Lower leg skin (tissue), 4 donors: ENCODE measurements at regions of chr15 and their contacts with region 1.

Region 1: DNA sequence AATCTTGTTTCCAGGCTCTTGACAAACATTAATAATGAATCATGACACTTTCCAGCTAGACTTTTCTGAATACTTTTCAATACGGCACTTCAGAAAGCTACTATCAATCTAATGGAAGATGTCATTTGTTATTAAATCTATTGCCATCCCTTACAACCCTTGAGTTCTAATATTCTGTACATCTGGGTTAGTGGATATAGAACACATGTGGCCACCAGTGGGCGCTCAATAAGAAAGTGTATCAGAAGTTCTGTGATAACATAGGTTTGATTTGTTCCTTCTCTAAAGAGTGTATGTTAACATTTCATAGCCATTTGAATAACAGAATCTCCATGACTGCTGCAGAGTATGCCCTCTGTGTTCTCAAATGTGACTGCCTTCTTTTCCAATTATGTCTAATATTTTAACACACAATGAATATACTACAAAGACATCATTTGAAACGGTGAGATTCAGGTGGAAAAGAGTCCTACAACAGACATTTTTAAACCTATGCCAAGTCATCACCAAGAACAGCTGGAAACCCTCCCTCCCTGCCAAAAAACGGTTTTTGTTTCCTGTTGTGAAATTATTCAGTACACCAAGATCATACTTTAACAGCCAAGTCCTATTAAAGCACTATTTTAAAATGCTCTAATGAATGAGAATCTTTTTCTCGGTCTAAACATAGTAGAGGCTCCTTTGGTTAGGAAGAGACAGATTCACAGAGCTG is 22.2 kb downstream of the ALDH1A2 start:
- DNase-seq: peak in 1 of 2 donors; percentile 18
- H3K4me3 ChIP-seq: no peak overlapping the region
- CTCF ChIP-seq: no peak
- POLR2A ChIP-seq: no peak

Region 2: DNA sequence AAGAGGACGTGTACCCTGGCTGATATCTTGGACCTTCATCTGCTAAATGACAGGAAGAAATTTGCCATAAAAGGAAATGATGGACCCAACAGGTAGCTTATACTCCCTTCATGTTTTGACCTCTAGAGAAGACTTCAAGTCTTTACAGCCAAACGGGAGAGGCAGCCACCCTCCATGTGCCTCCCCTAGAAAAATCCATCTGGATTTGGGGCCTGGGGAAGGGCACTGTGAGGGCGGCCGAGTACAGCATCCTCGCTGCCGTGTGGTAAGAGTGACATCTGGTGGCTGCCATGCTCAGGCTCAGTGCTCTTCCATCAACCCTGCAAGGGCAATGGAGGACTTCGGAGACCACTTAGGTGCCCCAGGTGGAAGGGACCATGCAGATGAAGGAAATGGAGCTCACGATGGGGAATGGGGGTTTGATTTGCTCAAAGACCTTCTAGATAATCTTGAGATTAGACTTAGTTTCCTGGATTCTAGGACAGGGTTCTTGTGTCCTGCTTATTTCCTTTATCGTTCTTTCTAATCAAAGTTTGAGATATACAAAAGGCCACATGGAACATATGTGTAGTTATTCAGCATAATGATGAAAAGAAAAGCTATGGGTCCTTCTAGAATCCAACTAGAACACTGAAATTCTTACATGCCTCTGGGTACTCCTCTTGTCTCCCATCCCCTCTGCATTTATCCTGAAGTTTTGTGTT is 139.3 kb after region 1 on chr15:
- intact Hi-C with region 1: loop called (anchors 10 kb)
- DNase-seq: no peak
- H3K4me3 ChIP-seq: no peak overlapping the region
- CTCF ChIP-seq: no peak
- POLR2A ChIP-seq: no peak